ENCODE measurements at regions of chr1 and their contacts with region 1.

Region 1: DNA sequence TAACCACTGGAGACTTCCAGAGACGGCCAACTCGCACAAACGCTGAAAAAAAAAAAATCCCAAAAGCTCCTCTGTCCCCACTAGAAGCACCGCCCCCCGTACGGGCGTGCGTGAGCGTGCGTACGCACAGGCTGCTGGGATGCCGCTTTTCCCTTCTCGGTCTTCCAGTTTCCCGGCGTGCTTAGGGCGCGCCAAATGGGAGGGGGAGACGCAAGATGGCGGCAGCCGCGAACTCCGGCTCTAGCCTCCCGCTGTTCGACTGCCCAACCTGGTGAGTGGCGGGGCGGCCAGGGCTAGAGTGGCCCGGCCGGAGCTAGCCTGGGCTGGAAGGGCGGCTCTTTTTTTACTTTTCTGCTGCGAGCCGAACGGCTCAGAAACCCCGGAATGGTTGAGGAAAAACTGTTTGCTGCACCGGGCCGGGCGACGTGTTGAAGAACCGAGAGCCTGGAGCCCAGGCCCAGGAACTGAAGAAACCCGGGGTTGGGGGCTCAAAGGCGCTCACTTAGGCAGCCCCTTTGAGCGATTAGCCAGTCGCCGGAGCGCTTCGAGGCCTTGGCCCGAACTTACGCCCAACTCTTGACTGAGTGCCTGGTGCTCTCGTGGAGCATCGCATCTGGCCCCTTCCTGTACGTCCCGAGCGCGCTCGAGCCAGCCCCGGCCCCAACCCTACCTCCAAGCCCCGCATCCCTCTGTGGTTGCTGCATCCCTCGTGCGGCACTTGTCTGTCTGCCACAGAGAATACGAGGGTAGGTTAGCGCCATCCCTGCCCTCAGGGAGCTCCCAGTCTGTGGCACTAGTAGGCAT is at the start of gene PPP1R8:
- DNase-seq: peak; percentile 94
- H3K4me3 Mint-ChIP-seq: peak within 1 kb of the TSS; percentile 92
- H3K27ac Mint-ChIP-seq: peak within 1 kb of the TSS; percentile 87
- H3K4me1 Mint-ChIP-seq: peaks cover 34% of the 10 kb centered on the region
- H3K27me3 Mint-ChIP-seq: no peaks in the 10 kb centered on the region
- total RNA-seq, gene PPP1R8: 42.9 to 43.8 TPM

Region 2: DNA sequence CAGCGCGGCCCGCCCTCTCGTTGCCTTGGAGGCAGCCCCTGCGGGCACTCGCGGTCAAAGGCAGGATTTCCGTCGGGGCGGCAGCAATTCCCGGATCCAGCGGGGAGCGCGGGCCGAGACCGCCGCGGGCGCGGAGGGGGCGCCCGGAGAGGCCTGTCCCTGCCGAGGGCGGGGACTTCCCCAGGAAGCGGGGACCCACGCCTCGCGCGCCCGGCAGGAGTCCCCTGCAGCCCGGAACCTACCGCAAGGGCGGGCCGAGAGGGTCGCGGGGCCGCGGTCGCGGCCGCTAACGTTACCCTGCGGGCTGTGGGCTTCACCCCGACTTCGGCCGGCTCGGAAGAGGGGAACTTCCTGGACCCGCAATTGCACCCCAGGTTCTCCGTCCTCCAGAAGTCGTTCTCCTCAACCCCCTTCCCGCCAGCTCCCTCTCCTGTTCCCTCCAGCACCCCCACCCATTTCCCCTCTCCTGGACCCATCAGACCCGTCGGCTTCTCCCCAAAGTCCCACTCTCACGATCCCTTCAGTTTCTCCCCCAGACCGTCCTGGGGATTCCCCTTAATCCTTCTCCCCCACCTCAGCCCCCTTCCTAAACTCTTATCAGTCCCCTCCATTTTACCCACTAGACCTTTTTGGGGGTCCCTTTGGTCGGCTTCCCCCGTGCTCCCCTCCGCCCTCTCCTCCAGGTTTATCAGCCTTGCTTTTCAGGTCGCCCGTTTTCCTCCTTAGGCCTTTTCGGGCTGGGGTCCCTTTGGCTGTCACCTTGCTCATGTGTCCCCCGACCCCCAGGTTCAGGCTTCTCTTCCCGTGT is 196.4 kb before region 1 on chr1:
- CTCF ChIA-PET with region 1: no interaction called
- POLR2A ChIA-PET with region 1: no interaction called
- intact Hi-C with region 1: no loop called
- DNase-seq: peak; percentile 64
- H3K4me3 Mint-ChIP-seq: peak overlapping the region; percentile 48
- H3K27ac Mint-ChIP-seq: no peak overlapping the region
- H3K4me1 Mint-ChIP-seq: peaks cover 63% of the 10 kb centered on the region
- H3K27me3 Mint-ChIP-seq: no peaks in the 10 kb centered on the region

Region 3: GRCh38 chr1:27772933-27773825 is 57.6 kb before region 1 on chr1 and contains the start of gene STX12:
- CTCF ChIA-PET with region 1: interaction called, 3 read pairs
- POLR2A ChIA-PET with region 1: interaction called, 13 read pairs
- intact Hi-C with region 1: loop called (anchors 1 kb)
- DNase-seq: peak; percentile 100
- H3K4me3 Mint-ChIP-seq: peak within 1 kb of the TSS; percentile 95
- H3K27ac Mint-ChIP-seq: peak within 1 kb of the TSS; percentile 99
- H3K4me1 Mint-ChIP-seq: peaks cover 35% of the 10 kb centered on the region
- H3K27me3 Mint-ChIP-seq: no peaks in the 10 kb centered on the region
- total RNA-seq, gene STX12: 31.8 to 32.0 TPM